CD14-positive monocyte (primary cell): ENCODE measurements at regions of chr3 and their contacts with region 1.

Region 1: GRCh38 chr3:152268555-152269425 is at the start of gene MBNL1:
- DNase-seq: peak; percentile 78 to 86 (median 78)
- H3K4me3 ChIP-seq: peak within 1 kb of the TSS; percentile 89 to 99 (median 94)
- H3K4me3 Mint-ChIP-seq: peak within 1 kb of the TSS; percentile 94 to 97
- H3K27ac ChIP-seq: peak within 1 kb of the TSS; percentile 98 to 99
- H3K27ac Mint-ChIP-seq: peak within 1 kb of the TSS; percentile 97 to 99 (median 98)
- H3K4me1 ChIP-seq: peaks cover 49 to 75% of the 10 kb centered on the region in 2 donors
- H3K4me1 Mint-ChIP-seq: peaks cover 65% of the 10 kb centered on the region
- H3K27me3 ChIP-seq: no peaks in the 10 kb centered on the region
- H3K27me3 Mint-ChIP-seq: peaks cover 0 to 1% (median 0%) of the 10 kb centered on the region in 3 donors
- CTCF ChIP-seq: no peak
- polyA plus RNA-seq, gene MBNL1: 190 to 204 (median 191) TPM

Region 2: DNA sequence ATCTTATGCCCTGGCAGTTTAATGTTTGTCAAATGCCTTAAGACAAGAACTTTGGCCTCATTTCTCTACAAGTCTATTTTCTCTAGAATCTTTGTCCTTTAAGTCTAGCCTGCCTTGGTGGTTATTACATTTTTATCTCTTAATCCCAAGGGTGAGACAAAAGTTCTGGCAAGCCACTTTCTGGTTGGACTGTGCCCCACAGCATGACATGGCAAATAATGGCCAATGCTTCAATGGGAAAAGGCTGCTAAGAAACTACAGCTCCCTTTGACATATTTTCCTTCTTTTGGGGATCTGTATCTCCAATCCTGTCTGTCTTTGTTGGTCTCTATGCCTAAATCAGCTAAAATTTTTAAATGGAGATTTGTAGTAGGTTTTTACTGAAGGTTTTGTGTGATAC is 181.6 kb before region 1 on chr3:
- intact Hi-C with region 1: no loop called
- DNase-seq: no peak
- H3K4me3 ChIP-seq: no peak overlapping the region
- H3K4me3 Mint-ChIP-seq: no peak overlapping the region
- H3K27ac ChIP-seq: no peak overlapping the region
- H3K27ac Mint-ChIP-seq: no peak overlapping the region
- H3K4me1 ChIP-seq: no peaks in the 10 kb centered on the region
- H3K4me1 Mint-ChIP-seq: peaks cover 3% of the 10 kb centered on the region
- H3K27me3 ChIP-seq: no peaks in the 10 kb centered on the region
- H3K27me3 Mint-ChIP-seq: no peaks in the 10 kb centered on the region
- CTCF ChIP-seq: no peak

Region 3: GRCh38 chr3:152139651-152140050 is 129.1 kb before region 1 on chr3:
- intact Hi-C with region 1: no loop called
- DNase-seq: no peak
- H3K4me3 ChIP-seq: no peak overlapping the region
- H3K4me3 Mint-ChIP-seq: no peak overlapping the region
- H3K27ac ChIP-seq: no peak overlapping the region
- H3K27ac Mint-ChIP-seq: peak overlapping the region in 1 of 7 donors; percentile 2
- H3K4me1 ChIP-seq: no peaks in the 10 kb centered on the region
- H3K4me1 Mint-ChIP-seq: no peaks in the 10 kb centered on the region
- H3K27me3 ChIP-seq: no peaks in the 10 kb centered on the region
- H3K27me3 Mint-ChIP-seq: peaks cover 0 to 2% (median 0%) of the 10 kb centered on the region in 3 donors
- CTCF ChIP-seq: no peak

Region 4: DNA sequence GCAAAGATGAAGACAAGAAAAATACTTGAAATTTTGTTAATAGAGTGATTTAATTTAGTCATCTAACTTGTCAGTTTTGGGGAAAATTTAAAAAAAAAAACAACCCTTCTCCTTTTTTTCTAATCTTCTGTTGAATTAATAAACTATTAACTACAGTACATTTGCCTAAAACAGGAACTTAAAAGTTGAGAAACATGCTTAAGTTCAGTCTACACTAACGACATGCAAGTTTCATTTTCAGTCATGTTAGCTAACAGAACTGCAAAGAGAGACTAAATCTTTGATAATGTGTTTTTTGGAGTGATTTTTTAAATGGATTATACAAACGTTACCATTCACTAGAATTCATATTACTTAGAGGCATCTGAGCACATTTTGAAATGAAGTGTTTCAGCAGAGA is 72.0 kb before region 1 on chr3:
- intact Hi-C with region 1: loop called in 1 of 2 experiments (anchors 5 kb)
- DNase-seq: peak; percentile 64 to 90 (median 86)
- H3K4me3 ChIP-seq: peak overlapping the region; percentile 14 to 74 (median 42)
- H3K4me3 Mint-ChIP-seq: peak overlapping the region; percentile 69 to 95
- H3K27ac ChIP-seq: peak overlapping the region in 1 of 2 donors; percentile 87
- H3K27ac Mint-ChIP-seq: peak overlapping the region; percentile 94 to 98 (median 97)
- H3K4me1 ChIP-seq: peaks cover 68 to 92% of the 10 kb centered on the region in 2 donors
- H3K4me1 Mint-ChIP-seq: peaks cover 77% of the 10 kb centered on the region
- H3K27me3 ChIP-seq: no peaks in the 10 kb centered on the region
- H3K27me3 Mint-ChIP-seq: no peaks in the 10 kb centered on the region
- CTCF ChIP-seq: no peak

Region 5: DNA sequence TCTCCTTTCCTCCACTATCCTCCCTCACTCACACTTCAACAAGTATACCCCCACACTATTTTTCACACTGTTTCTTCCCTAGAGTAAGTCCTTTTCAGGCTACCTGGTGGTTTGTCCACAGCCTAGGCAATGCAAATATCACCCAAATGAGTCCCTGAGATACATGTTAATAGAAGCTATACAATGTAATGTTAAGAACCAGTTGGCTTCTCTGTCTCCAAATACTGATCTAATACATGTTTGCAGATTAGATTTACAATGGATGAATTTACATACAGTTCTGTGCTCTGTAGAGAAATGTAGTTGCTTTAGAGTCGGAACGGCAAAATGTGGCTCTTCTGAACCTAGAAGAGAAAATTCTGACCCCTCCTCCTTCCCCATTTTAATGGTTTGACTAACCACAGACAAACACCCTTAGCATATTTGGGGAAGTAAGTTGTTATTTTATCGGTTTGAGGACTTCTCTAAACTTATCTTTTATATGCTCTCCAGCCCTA is 63.6 kb before region 1 on chr3:
- intact Hi-C with region 1: loop called in 1 of 2 experiments (anchors 5 kb)
- DNase-seq: peak; percentile 73 to 91 (median 83)
- H3K4me3 ChIP-seq: peak overlapping the region; percentile 76 to 100 (median 92)
- H3K4me3 Mint-ChIP-seq: peak overlapping the region; percentile 84 to 99
- H3K27ac ChIP-seq: peak overlapping the region; percentile 45 to 89
- H3K27ac Mint-ChIP-seq: peak overlapping the region; percentile 92 to 99 (median 97)
- H3K4me1 ChIP-seq: peaks cover 22 to 50% of the 10 kb centered on the region in 2 donors
- H3K4me1 Mint-ChIP-seq: peaks cover 32% of the 10 kb centered on the region
- H3K27me3 ChIP-seq: no peaks in the 10 kb centered on the region
- H3K27me3 Mint-ChIP-seq: no peaks in the 10 kb centered on the region
- CTCF ChIP-seq: no peak